WTC11 (cell line): ENCODE measurements at regions of chr2 and their contacts with region 1.

Region 1: DNA sequence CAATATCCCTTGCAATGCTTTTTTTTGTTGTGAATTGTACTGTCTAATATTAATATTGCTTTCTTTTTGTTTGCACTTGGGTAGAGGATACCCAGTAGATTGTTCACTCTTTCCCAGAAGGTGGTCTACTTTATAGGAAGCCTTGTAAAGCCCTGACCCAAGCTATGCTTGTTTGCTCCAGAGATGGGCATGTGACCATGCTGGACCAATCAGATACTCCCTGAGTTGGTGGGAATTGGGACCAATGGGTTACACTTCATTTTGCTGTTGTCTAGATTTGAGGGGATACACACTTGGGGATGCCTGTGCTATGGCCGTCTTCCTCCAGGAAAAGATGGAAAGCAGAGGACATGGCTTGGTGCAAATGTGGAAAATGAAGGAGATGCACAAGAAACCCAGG is 314.3 kb downstream of the DYSF start:
- DNase-seq: no peak
- ATAC-seq: no peak
- H3K4me3 Mint-ChIP-seq: no peak overlapping the region
- H3K27ac Mint-ChIP-seq: no peak overlapping the region
- H3K4me1 Mint-ChIP-seq: no peaks in the 10 kb centered on the region
- H3K27me3 Mint-ChIP-seq: peaks cover 4% of the 10 kb centered on the region; the same call in 1 of the 2 replicates
- CTCF ChIP-seq: no peak

Region 2: DNA sequence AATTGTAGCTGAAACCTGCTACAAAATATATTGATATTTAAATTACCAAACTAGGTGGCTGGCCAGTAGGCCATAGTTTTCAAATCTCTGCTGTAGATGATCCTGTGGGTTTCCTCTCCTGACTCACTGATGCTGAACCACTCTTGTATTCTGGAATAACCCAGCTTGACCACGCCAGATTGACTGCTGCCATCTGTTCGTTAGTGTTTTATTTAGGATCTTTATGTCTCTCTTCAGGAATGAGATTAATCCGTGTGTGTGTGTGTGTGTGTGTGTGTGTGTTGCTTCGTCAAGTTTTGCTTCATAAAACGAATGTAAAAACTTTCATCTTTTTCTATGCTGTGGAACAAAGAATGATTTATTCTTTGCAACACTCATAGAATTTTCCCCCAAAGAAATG is 127.2 kb before region 1 on chr2:
- CTCF ChIA-PET with region 1: no interaction called
- POLR2A ChIA-PET with region 1: interaction called, 11 read pairs
- DNase-seq: no peak
- ATAC-seq: no peak
- H3K4me3 Mint-ChIP-seq: no peak overlapping the region
- H3K27ac Mint-ChIP-seq: no peak overlapping the region
- H3K4me1 Mint-ChIP-seq: peaks cover 15% of the 10 kb centered on the region
- H3K27me3 Mint-ChIP-seq: no peaks in the 10 kb centered on the region
- CTCF ChIP-seq: no peak